ENCODE measurements at regions of chr5 and their contacts with region 1.

Region 1: DNA sequence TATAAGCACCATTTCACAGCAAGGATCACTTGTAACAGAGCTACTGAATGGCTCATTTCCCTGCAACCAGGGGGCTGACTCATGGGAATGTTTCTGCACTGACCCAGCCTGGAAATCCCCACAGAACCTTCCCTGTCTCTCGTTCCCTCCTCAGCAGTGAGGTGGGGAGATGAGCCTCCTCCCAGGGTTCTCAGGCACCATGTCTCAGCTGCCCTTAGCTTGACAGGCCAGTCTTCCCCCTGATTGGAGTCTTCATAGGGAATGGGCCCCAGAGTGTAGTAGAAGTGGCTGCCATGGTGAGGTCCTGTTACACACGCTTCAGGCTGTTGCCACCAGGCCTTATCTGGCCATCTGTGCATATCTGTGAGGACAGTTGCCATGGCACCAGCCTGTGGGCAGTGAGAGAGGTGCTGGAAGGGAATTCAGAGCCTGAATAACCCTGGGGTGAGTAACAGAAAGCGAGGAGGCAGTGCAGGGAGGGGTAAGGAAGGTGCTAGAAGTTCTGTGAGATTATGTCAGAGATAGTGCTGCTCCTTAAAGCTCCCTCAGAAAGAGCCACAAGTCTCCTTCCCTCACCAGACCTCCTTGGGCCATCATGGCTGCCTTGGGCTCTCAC is 324.4 kb downstream of the ENC1 start:
- DNase-seq: peak; percentile 99
- H3K4me3 ChIP-seq: no peak overlapping the region
- H3K27ac ChIP-seq: peak overlapping the region; percentile 98
- H3K4me1 ChIP-seq: peaks cover 52% of the 10 kb centered on the region
- H3K27me3 ChIP-seq: no peaks in the 10 kb centered on the region
- CTCF ChIP-seq: no peak

Region 2: GRCh38 chr5:74199005-74199404 is 117.2 kb before region 1 on chr5:
- CTCF ChIA-PET with region 1: no interaction called
- dilution Hi-C with region 1: no loop called
- in situ Hi-C with region 1: no loop called
- intact Hi-C with region 1: loop called (anchors 1 kb)
- DNase-seq: no peak
- H3K4me3 ChIP-seq: no peak overlapping the region
- H3K27ac ChIP-seq: no peak overlapping the region
- H3K4me1 ChIP-seq: peaks cover 33% of the 10 kb centered on the region
- H3K27me3 ChIP-seq: no peaks in the 10 kb centered on the region
- CTCF ChIP-seq: no peak

Region 3: GRCh38 chr5:74240786-74241750 is 75.1 kb before region 1 on chr5:
- CTCF ChIA-PET with region 1: no interaction called
- dilution Hi-C with region 1: no loop called
- in situ Hi-C with region 1: no loop called
- intact Hi-C with region 1: loop called (anchors 1 kb)
- DNase-seq: peak; percentile 100
- H3K4me3 ChIP-seq: peak overlapping the region in 2 of 3 experiments; percentile 3 to 11
- H3K27ac ChIP-seq: peak overlapping the region; percentile 96
- H3K4me1 ChIP-seq: peaks cover 39% of the 10 kb centered on the region
- H3K27me3 ChIP-seq: no peaks in the 10 kb centered on the region
- CTCF ChIP-seq: no peak

Region 4: DNA sequence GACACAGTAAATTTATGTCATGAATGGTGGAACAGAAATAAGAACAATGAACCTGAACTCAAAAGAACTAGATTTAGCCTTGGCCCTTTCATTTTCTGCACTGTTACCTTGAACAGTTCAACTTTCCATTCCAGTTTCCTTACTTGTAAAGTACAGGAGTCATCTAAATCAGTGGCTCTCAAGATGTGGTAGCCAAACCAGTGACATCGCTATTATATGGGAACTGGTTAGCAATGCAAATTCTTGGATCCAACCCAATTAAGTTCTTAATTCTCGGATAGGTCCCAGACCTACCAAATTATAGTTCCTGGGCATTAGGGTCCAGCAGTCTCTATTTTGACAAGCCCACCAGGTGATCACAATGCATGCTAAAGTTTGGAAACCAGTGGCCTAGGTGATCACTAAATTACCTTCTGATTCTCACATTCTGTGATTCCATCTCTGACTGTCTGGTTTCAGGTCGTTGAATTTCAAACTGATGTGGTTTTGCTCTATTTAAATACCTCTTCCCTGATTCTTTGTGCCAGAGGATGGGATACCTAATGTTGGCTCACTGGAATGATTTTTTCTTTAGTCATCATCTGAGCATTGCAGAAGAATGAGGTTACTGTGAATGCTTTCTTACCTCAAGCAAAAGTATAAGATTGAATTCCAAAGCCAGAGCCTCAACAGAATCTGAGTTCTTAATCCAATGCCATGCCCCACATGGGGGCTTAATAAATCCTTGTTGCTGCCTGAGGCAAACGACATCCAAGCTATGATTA is 70.6 kb after region 1 on chr5:
- CTCF ChIA-PET with region 1: no interaction called
- dilution Hi-C with region 1: no loop called
- in situ Hi-C with region 1: loop called in 1 of 2 experiments (anchors 10 kb)
- intact Hi-C with region 1: loop called (anchors 2 kb)
- DNase-seq: peak; percentile 93
- H3K4me3 ChIP-seq: no peak overlapping the region
- H3K27ac ChIP-seq: peak overlapping the region; percentile 64
- H3K4me1 ChIP-seq: peaks cover 63% of the 10 kb centered on the region
- H3K27me3 ChIP-seq: no peaks in the 10 kb centered on the region
- CTCF ChIP-seq: no peak

Region 5: DNA sequence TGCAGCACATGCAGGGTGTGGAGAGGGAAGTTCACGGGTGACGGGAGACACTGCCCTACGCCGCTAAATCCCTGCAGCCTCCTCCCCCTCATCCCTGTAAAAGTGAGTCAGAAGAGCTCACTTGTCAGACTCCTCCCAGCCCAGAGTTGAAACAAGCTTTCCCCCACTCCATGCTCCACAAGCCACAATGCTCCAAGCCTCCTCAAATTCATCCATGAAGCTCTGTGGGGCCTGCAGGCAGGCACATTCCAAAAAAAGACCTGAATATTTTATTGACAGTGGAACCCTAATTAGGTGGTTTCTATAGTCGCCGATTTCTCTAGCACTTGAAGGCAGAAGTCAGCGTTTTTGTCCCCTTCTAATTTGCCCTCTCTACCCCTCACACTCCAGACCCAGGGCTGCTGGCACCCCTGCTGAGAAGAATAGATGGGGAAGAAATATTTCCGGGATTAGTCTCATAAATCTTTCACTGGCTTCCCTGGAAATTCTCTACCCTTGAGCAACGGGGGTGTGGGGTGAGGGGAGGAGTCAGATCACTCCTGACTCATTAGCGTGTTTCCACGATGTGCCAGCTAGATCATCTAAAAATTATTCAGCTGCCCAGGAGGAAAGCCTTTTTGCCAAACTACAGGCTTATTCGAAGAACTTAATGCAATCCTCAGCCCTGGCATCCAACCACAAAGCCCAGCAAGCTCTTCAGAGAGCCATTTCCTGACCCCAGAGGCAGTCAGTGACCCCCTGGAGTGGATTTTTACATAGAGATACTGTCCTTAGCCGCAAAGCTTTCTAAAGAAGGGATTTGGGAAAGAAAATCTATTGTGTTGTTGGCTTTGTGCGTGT is 227.2 kb after region 1 on chr5:
- CTCF ChIA-PET with region 1: no interaction called
- dilution Hi-C with region 1: no loop called
- in situ Hi-C with region 1: no loop called
- intact Hi-C with region 1: loop called (anchors 5 kb)
- DNase-seq: peak; percentile 91
- H3K4me3 ChIP-seq: peak overlapping the region in 1 of 3 experiments; percentile 16
- H3K27ac ChIP-seq: peak overlapping the region; percentile 92
- H3K4me1 ChIP-seq: peaks cover 46% of the 10 kb centered on the region
- H3K27me3 ChIP-seq: no peaks in the 10 kb centered on the region
- CTCF ChIP-seq: no peak

Measured in mammary epithelial cell (primary cell).